ENCODE measurements at regions of chr7 and their contacts with region 1.

Region 1: DNA sequence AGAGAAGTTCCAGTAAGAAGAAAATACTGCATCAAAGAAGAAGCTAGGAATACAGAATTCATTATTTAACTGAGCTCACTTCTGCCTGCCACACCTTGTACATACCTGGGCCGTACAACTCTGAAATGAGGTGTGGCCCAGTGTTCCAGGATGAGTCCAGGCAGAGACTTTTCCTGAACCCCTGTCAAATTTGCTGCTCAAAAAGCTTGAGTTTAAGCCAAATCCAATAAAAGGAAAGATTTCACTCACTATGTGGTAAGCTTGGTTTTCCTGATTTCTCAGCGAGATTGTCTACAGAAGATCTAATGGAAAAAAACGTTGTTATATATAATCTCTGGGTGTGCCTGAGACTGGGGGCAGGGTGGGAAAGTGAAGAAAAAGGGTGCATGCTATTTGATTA is 72.1 kb upstream of the EGFR start:
- DNase-seq: peak; percentile 91
- H3K4me3 ChIP-seq: no peak overlapping the region
- H3K27ac ChIP-seq: peak overlapping the region; percentile 99
- H3K4me1 ChIP-seq: peaks cover 24% of the 10 kb centered on the region
- H3K27me3 ChIP-seq: no peaks in the 10 kb centered on the region
- CTCF ChIP-seq: no peak

Region 2: GRCh38 chr7:54985405-54986330 is 38.9 kb after region 1 on chr7:
- CTCF ChIA-PET with region 1: no interaction called
- dilution Hi-C with region 1: no loop called
- in situ Hi-C with region 1: no loop called
- intact Hi-C with region 1: loop called (anchors 1 kb)
- DNase-seq: peak; percentile 93
- H3K4me3 ChIP-seq: peak overlapping the region in 2 of 3 experiments; percentile 1 to 25
- H3K27ac ChIP-seq: peak overlapping the region; percentile 96
- H3K4me1 ChIP-seq: peaks cover 31% of the 10 kb centered on the region
- H3K27me3 ChIP-seq: no peaks in the 10 kb centered on the region
- CTCF ChIP-seq: no peak

Region 3: DNA sequence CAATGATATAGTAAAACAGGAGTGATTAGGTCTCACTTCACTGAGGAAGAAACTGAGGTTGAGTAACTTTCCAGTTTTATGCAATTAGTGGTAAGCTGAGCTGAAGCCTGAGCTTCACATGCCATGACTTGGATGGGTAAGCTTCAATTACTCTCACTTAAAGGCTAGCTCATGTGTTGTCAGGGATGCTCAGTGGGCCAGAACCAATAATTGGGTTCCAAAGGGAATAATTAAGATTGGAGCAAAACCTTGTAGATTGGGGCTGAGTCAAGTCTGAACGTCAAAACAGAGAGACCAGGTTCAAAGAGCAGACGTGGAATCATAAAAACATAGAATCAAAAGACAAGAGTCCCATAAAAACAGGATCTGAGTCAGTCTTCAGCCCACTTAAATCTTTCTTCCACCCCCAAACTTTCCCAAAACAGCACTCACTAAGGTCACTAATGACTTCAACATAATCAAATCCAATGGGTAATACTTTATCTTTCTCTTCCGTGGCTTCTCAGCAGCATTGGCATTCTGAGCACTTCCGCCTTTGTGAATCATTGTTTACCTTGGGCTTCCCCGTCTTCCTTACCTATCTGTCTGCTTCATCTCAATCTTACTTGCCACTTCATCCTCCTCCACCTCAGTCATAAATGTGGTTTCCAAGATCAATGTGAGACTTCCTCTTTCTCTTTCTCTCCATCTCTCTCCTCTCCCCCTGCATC is 49.0 kb after region 1 on chr7:
- CTCF ChIA-PET with region 1: no interaction called
- dilution Hi-C with region 1: no loop called
- in situ Hi-C with region 1: no loop called
- intact Hi-C with region 1: loop called (anchors 2 kb)
- DNase-seq: peak; percentile 92
- H3K4me3 ChIP-seq: peak overlapping the region in 1 of 3 experiments; percentile 4
- H3K27ac ChIP-seq: peak overlapping the region; percentile 88
- H3K4me1 ChIP-seq: peaks cover 31% of the 10 kb centered on the region
- H3K27me3 ChIP-seq: no peaks in the 10 kb centered on the region
- CTCF ChIP-seq: no peak

Region 4: GRCh38 chr7:55265836-55266642 is 319.3 kb after region 1 on chr7:
- CTCF ChIA-PET with region 1: no interaction called
- dilution Hi-C with region 1: no loop called
- in situ Hi-C with region 1: no loop called
- intact Hi-C with region 1: no loop called
- DNase-seq: no peak
- H3K4me3 ChIP-seq: no peak overlapping the region
- H3K27ac ChIP-seq: no peak overlapping the region
- H3K4me1 ChIP-seq: no peaks in the 10 kb centered on the region
- H3K27me3 ChIP-seq: no peaks in the 10 kb centered on the region
- CTCF ChIP-seq: no peak

Measured in mammary epithelial cell (primary cell).